A673 (cell line): ENCODE measurements at regions of chr6 and their contacts with region 1.

Region 1: DNA sequence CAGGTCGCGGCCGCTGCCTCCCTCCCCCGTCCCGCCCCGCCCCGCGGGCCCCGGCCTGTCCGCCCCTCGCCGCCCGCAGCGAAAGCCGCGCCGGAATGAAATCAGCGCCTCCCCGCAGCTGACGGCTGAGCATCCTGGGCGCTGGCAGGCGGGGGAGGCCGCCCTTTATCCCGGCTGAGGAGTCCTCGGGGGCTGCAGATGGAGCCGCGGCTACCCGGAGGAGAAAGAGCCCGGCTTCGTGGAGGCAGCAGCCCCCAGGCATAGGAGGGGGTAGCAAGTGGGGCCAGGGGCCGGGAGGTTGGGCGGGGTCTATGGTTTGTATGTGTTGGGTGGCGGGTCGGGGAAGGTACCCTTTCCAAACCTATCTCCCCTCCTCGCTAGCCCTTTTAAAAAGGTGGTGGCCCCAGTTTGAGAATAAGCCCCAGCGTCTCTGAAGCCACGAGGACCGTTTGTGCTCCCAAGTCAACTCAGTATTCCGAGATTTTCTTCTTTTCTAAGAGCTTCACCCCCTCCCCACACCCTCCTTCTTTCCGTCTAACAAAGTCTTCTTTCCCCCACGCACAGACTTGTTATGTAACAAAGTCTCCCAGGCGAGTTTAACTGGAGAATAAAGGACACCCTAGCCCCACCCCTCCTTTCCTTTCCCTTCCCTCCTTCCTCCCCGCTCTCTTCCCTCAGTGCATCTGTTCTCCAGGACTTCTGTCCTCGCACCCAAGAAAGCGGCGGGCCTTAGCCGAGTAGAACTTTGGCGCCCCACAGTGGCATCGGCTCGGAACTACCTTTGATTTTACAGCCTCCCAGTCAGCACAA is 11.0 kb downstream of the POU3F2 start:
- DNase-seq: peak; percentile 96
- H3K4me3 ChIP-seq: peak overlapping the region; percentile 60
- H3K27ac ChIP-seq: peak overlapping the region; percentile 45
- H3K4me1 ChIP-seq: peaks cover 26% of the 10 kb centered on the region
- H3K27me3 ChIP-seq: no peaks in the 10 kb centered on the region
- CTCF ChIP-seq: peak; percentile 97

Region 2: DNA sequence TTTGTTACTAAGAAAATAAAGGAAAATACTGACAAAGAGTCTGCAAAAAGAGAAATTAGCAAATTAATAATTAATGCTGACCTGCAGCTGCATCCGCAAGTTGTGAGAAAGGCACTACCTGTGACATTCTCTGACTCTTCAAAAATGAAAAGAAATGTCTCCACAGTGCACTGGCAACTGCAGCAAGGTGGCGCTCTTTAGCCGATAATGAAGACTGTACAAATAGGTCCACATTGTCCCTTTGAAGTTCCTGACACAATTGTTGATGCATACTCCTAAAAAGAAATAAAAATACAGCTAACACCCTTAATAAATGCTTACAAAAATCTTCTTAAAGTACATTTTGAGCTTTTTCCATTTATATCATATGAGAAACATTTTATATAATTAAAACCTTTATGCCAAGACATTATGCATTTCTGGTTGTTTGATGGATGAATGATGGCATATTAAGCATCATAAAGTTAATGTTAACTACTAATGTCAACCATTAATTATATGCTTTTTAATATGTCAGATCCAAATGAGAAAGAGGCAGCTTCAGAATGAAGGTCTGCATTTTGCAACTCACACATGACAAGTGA is 1658.9 kb before region 1 on chr6:
- CTCF ChIA-PET with region 1: no interaction called
- POLR2A ChIA-PET with region 1: no interaction called
- intact Hi-C with region 1: loop called (anchors 2 kb)
- DNase-seq: peak; percentile 85
- H3K4me3 ChIP-seq: no peak overlapping the region
- H3K27ac ChIP-seq: no peak overlapping the region
- H3K4me1 ChIP-seq: peaks cover 36% of the 10 kb centered on the region
- H3K27me3 ChIP-seq: no peaks in the 10 kb centered on the region
- CTCF ChIP-seq: peak; percentile 96

Region 3: DNA sequence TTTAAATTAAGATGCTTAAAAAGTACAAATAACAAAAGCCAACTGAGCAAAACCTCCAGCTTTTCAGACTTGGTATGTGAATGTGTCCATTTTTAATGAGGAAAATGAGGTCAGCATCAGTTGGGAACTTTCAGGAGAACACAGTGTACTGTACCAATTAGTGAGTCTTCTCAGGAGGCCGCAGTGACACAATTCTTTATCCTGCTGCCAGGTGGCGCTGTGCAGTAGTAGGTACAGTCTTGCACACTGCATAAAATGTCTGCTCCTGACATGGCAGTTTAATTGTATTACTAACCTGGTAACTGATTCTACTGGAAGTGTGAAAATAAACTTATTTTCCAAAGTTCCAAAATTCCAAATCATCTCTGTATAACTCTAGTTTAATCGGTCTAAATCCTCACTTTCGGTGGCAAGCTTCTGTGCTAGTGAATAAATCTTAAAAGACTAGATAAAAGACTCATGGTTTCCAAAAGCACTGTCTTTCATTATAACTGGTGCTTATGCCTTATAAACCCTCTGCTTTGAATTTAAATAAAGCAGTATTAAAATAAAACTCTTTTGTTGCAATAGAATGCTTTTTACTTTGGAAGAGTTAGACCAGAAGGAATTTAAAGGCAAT is 1347.6 kb before region 1 on chr6:
- CTCF ChIA-PET with region 1: no interaction called
- POLR2A ChIA-PET with region 1: no interaction called
- intact Hi-C with region 1: loop called (anchors 5 kb)
- DNase-seq: peak; percentile 93
- H3K4me3 ChIP-seq: no peak overlapping the region
- H3K27ac ChIP-seq: peak overlapping the region; percentile 76
- H3K4me1 ChIP-seq: peaks cover 34% of the 10 kb centered on the region
- H3K27me3 ChIP-seq: no peaks in the 10 kb centered on the region
- CTCF ChIP-seq: peak; percentile 93

Region 4: GRCh38 chr6:98054453-98054852 is 791.0 kb before region 1 on chr6:
- CTCF ChIA-PET with region 1: no interaction called
- POLR2A ChIA-PET with region 1: no interaction called
- intact Hi-C with region 1: loop called (anchors 5 kb)
- DNase-seq: peak; percentile 49
- H3K4me3 ChIP-seq: no peak overlapping the region
- H3K27ac ChIP-seq: no peak overlapping the region
- H3K4me1 ChIP-seq: no peaks in the 10 kb centered on the region
- H3K27me3 ChIP-seq: no peaks in the 10 kb centered on the region
- CTCF ChIP-seq: peak; percentile 59

Region 5: GRCh38 chr6:99002831-99003230 is 157.4 kb after region 1 on chr6:
- CTCF ChIA-PET with region 1: no interaction called
- POLR2A ChIA-PET with region 1: no interaction called
- intact Hi-C with region 1: no loop called
- DNase-seq: peak; percentile 55
- H3K4me3 ChIP-seq: no peak overlapping the region
- H3K27ac ChIP-seq: no peak overlapping the region
- H3K4me1 ChIP-seq: peaks cover 6% of the 10 kb centered on the region
- H3K27me3 ChIP-seq: no peaks in the 10 kb centered on the region
- CTCF ChIP-seq: no peak

Region 6: GRCh38 chr6:99119109-99120031 is 274.0 kb after region 1 on chr6:
- CTCF ChIA-PET with region 1: no interaction called
- POLR2A ChIA-PET with region 1: no interaction called
- intact Hi-C with region 1: loop called (anchors 5 kb)
- DNase-seq: peak; percentile 67
- H3K4me3 ChIP-seq: no peak overlapping the region
- H3K27ac ChIP-seq: no peak overlapping the region
- H3K4me1 ChIP-seq: no peaks in the 10 kb centered on the region
- H3K27me3 ChIP-seq: no peaks in the 10 kb centered on the region
- CTCF ChIP-seq: peak; percentile 75

Region 7: DNA sequence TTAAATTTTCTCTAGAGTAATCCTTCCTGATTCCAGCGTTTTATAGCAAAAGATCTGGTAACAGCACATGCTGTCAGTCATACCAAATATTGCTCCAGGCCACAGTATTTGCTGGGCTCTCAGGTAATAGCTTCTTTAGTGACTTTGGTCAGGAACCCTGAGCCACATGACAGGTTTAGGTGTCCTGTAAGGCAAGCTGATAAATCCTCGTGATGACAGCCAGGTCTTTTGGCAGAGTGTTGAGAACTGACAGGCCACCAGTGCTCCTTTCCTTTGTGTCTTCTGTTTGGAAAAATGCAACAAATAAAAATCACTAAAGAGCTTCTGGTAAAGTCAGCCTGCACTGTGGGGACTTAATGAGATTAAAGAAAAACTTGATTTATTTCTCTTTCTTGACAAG is 795.9 kb after region 1 on chr6:
- CTCF ChIA-PET with region 1: no interaction called
- POLR2A ChIA-PET with region 1: no interaction called
- intact Hi-C with region 1: no loop called
- DNase-seq: peak; percentile 18
- H3K4me3 ChIP-seq: no peak overlapping the region
- H3K27ac ChIP-seq: no peak overlapping the region
- H3K4me1 ChIP-seq: peaks cover 6% of the 10 kb centered on the region
- H3K27me3 ChIP-seq: peaks cover 3% of the 10 kb centered on the region
- CTCF ChIP-seq: no peak